Endothelial cell of umbilical vein (primary cell): ENCODE measurements at regions of chr6 and their contacts with region 1.

Region 1: DNA sequence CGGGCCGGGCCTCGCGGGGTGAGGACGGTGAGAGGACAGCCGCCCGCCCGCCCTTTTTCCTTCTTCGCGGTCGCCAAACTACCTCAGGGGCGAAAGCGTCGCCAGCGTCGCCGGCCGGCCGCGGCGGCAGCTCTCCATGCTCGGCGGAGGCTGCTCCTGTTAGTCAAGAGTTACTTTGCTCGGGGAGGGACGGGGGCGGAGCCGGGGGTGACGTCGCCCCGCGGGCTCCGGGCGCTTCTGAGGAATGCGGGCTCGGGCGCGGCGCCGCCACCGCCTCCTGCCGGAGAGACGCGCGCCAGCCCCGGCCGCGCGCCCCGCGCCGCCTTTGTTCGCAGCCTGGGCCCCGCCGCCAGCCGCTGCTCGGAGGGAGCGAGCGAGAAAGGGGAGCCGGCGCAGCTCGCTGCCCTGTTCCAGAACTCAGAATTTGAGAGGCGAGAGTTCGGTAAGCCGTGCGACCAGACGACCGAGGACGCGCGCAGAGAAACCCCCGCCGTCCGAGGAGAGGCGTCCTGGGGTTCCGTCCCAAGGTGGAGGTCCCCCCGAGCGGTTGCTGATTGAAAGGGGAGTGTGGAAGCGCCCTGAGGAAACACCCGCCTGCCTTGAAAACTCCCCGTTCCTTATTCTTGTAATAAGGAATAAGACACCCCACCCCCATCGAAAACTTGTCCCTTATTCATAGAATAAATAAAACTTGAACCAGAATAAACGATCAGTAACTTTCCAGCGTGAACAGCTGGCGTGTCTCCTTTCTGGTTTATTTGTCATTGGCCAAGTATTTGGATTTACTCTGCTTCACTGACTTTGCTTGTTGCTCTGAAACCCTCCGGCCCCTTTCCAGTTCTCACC is at the start of gene PTPRK:
- DNase-seq: peak; percentile 94
- H3K4me3 ChIP-seq: peak within 1 kb of the TSS; percentile 87 to 99 (median 98)
- H3K27ac ChIP-seq: peak within 1 kb of the TSS; percentile 98
- H3K4me1 ChIP-seq: peaks cover 36% of the 10 kb centered on the region
- H3K27me3 ChIP-seq: no peaks in the 10 kb centered on the region
- CTCF ChIP-seq: peak; percentile 32 to 68
- POLR2A ChIP-seq: peak; percentile 89
- total RNA-seq, gene PTPRK: 74.0 and 88.3 TPM in 2 replicates

Region 2: GRCh38 chr6:128209771-128210170 is 310.9 kb before region 1 on chr6:
- CTCF ChIA-PET with region 1: interaction called, 3 read pairs
- POLR2A ChIA-PET with region 1: no interaction called
- dilution Hi-C with region 1: no loop called
- intact Hi-C with region 1: loop called (anchors 5 kb)
- DNase-seq: peak; percentile 63
- H3K4me3 ChIP-seq: no peak overlapping the region
- H3K27ac ChIP-seq: peak overlapping the region; percentile 64
- H3K4me1 ChIP-seq: peaks cover 38% of the 10 kb centered on the region
- H3K27me3 ChIP-seq: no peaks in the 10 kb centered on the region
- CTCF ChIP-seq: no peak
- POLR2A ChIP-seq: no peak

Region 3: GRCh38 chr6:128327890-128328289 is 192.8 kb before region 1 on chr6:
- CTCF ChIA-PET with region 1: interaction called, 5 read pairs
- POLR2A ChIA-PET with region 1: no interaction called
- dilution Hi-C with region 1: no loop called
- intact Hi-C with region 1: loop called (anchors 2 kb)
- DNase-seq: no peak
- H3K4me3 ChIP-seq: no peak overlapping the region
- H3K27ac ChIP-seq: no peak overlapping the region
- H3K4me1 ChIP-seq: no peaks in the 10 kb centered on the region
- H3K27me3 ChIP-seq: no peaks in the 10 kb centered on the region
- CTCF ChIP-seq: peak; percentile 35 to 37
- POLR2A ChIP-seq: no peak

Region 4: GRCh38 chr6:128432394-128432793 is 88.3 kb before region 1 on chr6:
- CTCF ChIA-PET with region 1: no interaction called
- POLR2A ChIA-PET with region 1: no interaction called
- dilution Hi-C with region 1: no loop called
- intact Hi-C with region 1: loop called (anchors 5 kb)
- DNase-seq: peak; percentile 39
- H3K4me3 ChIP-seq: no peak overlapping the region
- H3K27ac ChIP-seq: no peak overlapping the region
- H3K4me1 ChIP-seq: peaks cover 7% of the 10 kb centered on the region
- H3K27me3 ChIP-seq: no peaks in the 10 kb centered on the region
- CTCF ChIP-seq: no peak
- POLR2A ChIP-seq: no peak

Region 5: DNA sequence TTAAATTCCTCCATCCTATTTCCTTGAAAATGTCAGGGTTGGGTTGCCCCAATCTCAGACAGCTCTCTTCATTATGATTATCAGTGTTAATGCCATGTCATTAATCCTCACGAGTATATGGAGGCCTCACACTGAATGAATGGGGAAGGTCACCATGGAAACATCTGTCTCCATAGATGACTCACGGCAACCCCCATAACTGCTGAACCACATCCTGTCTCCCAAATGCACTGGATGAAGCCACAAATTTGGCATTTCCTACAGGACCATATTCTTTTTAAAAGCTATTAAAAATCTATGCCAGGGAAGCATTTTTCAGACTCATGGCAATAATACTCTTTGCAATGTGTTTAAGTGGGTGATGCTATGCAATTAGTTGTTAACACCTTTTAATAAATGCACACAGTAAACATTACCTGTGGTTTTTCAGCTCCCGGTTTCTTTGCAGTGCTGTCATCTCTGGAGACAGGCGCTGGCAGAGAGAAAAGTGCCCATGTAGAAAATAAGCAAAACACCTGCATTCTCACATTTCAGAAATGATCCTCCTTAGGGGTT is 79.8 kb after region 1 on chr6:
- CTCF ChIA-PET with region 1: no interaction called
- POLR2A ChIA-PET with region 1: no interaction called
- dilution Hi-C with region 1: no loop called
- intact Hi-C with region 1: loop called (anchors 1 kb)
- DNase-seq: peak; percentile 83
- H3K4me3 ChIP-seq: no peak overlapping the region
- H3K27ac ChIP-seq: peak overlapping the region; percentile 67
- H3K4me1 ChIP-seq: peaks cover 22% of the 10 kb centered on the region
- H3K27me3 ChIP-seq: no peaks in the 10 kb centered on the region
- CTCF ChIP-seq: no peak
- POLR2A ChIP-seq: no peak

Region 6: GRCh38 chr6:129050086-129050485 is 529.4 kb after region 1 on chr6:
- CTCF ChIA-PET with region 1: no interaction called
- POLR2A ChIA-PET with region 1: no interaction called
- dilution Hi-C with region 1: no loop called
- intact Hi-C with region 1: loop called (anchors 10 kb)
- DNase-seq: no peak
- H3K4me3 ChIP-seq: no peak overlapping the region
- H3K27ac ChIP-seq: no peak overlapping the region
- H3K4me1 ChIP-seq: no peaks in the 10 kb centered on the region
- H3K27me3 ChIP-seq: no peaks in the 10 kb centered on the region
- CTCF ChIP-seq: no peak
- POLR2A ChIP-seq: no peak